GM10248 (cell line): ENCODE measurements at regions of chr1 and their contacts with region 1.

Region 1: GRCh38 chr1:110944806-110945205 is 18.9 kb downstream of the LRIF1 start:
- DNase-seq: no peak
- CTCF ChIP-seq: no peak

Region 2: GRCh38 chr1:110840718-110841117 is 104.1 kb before region 1 on chr1:
- CTCF ChIA-PET with region 1: no interaction called
- POLR2A ChIA-PET with region 1: no interaction called
- DNase-seq: no peak
- CTCF ChIP-seq: no peak

Region 3: GRCh38 chr1:110927484-110928075 is 17.2 kb before region 1 on chr1:
- CTCF ChIA-PET with region 1: interaction called, 11 read pairs
- POLR2A ChIA-PET with region 1: no interaction called
- DNase-seq: no peak
- CTCF ChIP-seq: no peak

Region 4: GRCh38 chr1:110976089-110976488 is 31.3 kb after region 1 on chr1:
- CTCF ChIA-PET with region 1: no interaction called
- POLR2A ChIA-PET with region 1: no interaction called
- DNase-seq: no peak
- CTCF ChIP-seq: no peak